Activated CD4-positive, alpha-beta T cell treated with anti-CD3 and anti-CD28 coated beads for 36 hours (primary cell): ENCODE measurements at regions of chr7 and their contacts with region 1.

Region 1: DNA sequence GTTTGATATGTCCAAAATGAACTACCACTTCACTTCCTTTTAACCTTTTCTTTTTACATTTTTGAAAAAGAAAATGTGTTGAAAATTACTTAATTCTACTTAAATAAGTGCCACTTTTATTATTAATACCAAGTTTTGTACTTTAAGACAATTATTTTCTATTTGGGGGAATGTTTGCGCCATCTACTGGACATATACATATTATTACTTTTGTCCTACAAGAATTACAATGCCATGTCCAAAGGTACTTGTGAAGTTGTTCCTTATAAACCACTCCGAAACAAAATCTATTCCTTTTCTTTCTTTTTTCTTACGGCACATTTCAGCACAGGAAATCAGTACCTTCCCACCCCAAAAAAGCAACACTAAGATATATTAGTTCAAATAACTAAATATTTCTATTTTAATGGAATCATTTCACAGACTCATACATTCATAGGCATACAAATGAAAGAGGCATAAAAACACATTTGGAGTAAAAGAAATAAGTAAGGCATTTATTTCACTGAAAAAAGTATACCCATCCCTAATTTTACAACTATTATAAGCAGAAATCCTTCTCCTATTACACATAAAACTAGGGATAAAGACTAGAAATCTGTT is 169.9 kb downstream of the RNF133 start:
- DNase-seq: no peak
- ATAC-seq: no peak
- H3K4me3 Mint-ChIP-seq: no peak overlapping the region
- H3K27ac Mint-ChIP-seq: no peak overlapping the region
- H3K4me1 Mint-ChIP-seq: no peaks in the 10 kb centered on the region
- H3K27me3 Mint-ChIP-seq: no peaks in the 10 kb centered on the region

Region 2: DNA sequence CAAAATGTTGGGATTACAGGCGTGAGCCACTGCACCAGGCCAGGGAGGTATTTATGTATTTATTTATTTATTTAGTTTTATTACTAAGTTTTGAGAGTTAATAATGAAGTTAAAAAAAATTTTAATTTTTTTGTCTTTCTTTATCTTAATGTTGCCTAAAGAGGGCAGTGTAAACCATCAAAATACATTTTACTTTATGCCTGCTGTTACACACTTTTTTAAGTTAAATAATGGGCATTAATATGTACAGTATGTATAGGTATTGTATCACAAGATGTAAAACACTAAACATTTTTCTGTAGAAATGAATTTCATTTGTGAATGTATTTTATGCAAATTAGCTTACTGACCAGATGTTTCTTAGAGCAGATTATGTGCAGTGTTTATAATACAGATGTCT is 514.3 kb before region 1 on chr7:
- CTCF ChIA-PET with region 1: no interaction called
- POLR2A ChIA-PET with region 1: no interaction called
- intact Hi-C with region 1: loop called in 1 of 2 experiments (anchors 10 kb)
- DNase-seq: no peak
- ATAC-seq: no peak
- H3K4me3 Mint-ChIP-seq: no peak overlapping the region
- H3K27ac Mint-ChIP-seq: no peak overlapping the region
- H3K4me1 Mint-ChIP-seq: peaks cover 4% of the 10 kb centered on the region
- H3K27me3 Mint-ChIP-seq: no peaks in the 10 kb centered on the region

Region 3: DNA sequence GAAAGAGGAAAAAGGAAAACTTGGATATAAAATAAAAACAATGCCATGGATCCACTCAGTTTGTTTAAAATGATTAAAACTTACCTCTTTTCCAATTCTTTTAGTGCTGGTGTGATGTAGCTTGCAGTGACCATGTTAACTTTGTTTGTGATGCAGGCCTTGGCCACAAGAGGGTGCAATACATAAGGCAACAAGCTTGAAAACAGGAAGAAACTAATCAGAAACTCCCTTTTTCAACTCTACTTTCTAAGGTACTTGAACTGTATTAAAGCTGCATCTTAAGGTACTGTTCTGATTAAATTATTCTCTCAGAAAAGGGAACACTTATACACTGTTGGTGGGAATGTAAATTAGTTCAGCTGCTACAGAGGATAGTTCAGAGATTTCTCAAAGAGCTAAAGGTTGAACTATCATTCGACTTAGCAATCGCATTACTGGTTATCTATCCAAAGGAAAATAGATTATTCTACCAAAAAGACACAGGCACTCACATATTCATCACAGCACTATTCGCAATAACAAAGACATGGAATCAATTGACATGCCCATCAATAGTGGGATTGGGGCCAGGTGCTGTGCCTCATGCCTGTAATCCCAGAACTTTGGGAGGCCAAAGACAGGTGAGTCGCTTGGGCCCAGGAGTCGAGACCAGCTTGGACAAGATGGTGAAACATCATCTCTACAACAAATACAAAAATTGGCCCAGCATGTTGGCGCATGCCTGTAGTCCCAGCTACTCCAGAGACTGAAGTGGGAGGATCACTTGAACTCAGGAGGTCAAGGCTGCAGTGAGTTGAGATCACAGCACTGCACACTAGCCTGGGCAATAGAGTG is 435.8 kb before region 1 on chr7:
- CTCF ChIA-PET with region 1: interaction called, 6 read pairs
- POLR2A ChIA-PET with region 1: no interaction called
- intact Hi-C with region 1: loop called (anchors 1 to 5 kb)
- DNase-seq: peak; percentile 75
- ATAC-seq: no peak
- H3K4me3 Mint-ChIP-seq: no peak overlapping the region
- H3K27ac Mint-ChIP-seq: no peak overlapping the region
- H3K4me1 Mint-ChIP-seq: no peaks in the 10 kb centered on the region
- H3K27me3 Mint-ChIP-seq: no peaks in the 10 kb centered on the region

Region 4: DNA sequence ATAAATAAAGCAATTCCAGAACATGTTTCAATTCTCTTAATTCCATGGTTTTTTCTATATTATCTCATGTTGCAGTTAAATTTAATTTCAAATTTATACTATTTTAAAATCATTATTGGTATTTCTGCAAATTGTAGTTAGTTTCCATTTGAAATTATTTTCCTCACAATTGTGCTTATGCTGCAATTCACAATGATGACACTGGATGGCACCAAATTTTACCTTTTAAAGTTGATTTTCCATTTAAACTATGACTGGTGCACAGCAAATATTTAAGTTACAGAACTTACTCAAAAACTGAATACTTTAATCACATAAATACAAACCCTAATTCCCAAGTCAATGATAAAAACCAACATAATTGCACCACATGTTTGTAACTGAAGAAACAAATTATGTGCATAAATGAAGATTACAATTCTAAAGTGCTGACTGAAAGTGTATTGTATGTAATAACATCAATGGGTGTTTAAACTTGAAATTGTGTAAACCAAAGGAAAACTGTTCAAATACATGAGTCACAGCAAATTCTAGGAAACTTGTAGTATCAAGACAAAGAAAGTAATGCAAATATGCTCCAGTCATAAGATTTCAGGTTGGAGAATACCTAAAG is 309.6 kb before region 1 on chr7:
- CTCF ChIA-PET with region 1: interaction called, 4 read pairs
- POLR2A ChIA-PET with region 1: no interaction called
- intact Hi-C with region 1: loop called (anchors 1 to 5 kb)
- DNase-seq: no peak
- ATAC-seq: no peak
- H3K4me3 Mint-ChIP-seq: no peak overlapping the region
- H3K27ac Mint-ChIP-seq: no peak overlapping the region
- H3K4me1 Mint-ChIP-seq: no peaks in the 10 kb centered on the region
- H3K27me3 Mint-ChIP-seq: peaks cover 4% of the 10 kb centered on the region